Naive thymus-derived CD8-positive, alpha-beta T cell (primary cell): ENCODE measurements at regions of chr7 and their contacts with region 1.

Region 1: GRCh38 chr7:139018910-139019309 is 16.9 kb downstream of the ZC3HAV1L start:
- DNase-seq: no peak
- ATAC-seq: no peak
- H3K4me3 Mint-ChIP-seq: no peak overlapping the region
- H3K27ac Mint-ChIP-seq: no peak overlapping the region
- H3K4me1 Mint-ChIP-seq: peaks cover 0 to 7% (median 7%) of the 10 kb centered on the region in 4 donors
- H3K27me3 Mint-ChIP-seq: peaks cover 0 to 5% (median 1%) of the 10 kb centered on the region in 5 donors

Region 2: DNA sequence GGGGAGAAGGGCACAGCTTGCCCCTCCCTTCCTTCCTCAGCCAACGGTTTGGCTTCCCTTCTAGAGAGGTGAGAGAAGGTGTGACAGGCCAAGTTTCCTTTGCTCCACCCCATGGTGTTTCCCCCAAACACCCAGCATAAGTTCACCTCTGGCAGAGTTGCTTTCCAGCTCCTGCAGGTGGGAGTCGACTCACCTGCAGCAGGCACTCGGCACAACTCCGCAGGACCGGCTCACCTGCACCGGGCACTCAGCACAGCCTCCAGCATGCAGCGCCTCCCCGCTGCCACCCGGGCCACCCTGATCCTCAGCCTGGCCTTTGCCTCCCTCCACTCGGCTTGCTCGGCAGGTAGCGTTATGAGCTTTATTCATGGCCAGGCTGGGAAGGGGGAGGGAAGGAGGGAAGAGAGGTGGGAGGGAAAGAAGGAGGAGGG is 221.1 kb before region 1 on chr7 and contains the starts of genes ATP6V0A4 and TMEM213:
- POLR2A ChIA-PET with region 1: no interaction called
- DNase-seq: no peak
- ATAC-seq: peak; percentile 49 to 71
- H3K4me3 Mint-ChIP-seq: peak within 1 kb of the TSS in 2 of 10 donors; percentile 25 to 41
- H3K27ac Mint-ChIP-seq: peak within 1 kb of the TSS in 7 of 10 donors; percentile 9 to 81 (median 44)
- H3K4me1 Mint-ChIP-seq: peaks cover 7 to 13% (median 10%) of the 10 kb centered on the region in 4 donors
- H3K27me3 Mint-ChIP-seq: peaks cover 0 to 3% (median 0%) of the 10 kb centered on the region in 5 donors
- polyA plus RNA-seq, gene ATP6V0A4: not detected
- polyA plus RNA-seq, gene TMEM213: not detected

Region 3: DNA sequence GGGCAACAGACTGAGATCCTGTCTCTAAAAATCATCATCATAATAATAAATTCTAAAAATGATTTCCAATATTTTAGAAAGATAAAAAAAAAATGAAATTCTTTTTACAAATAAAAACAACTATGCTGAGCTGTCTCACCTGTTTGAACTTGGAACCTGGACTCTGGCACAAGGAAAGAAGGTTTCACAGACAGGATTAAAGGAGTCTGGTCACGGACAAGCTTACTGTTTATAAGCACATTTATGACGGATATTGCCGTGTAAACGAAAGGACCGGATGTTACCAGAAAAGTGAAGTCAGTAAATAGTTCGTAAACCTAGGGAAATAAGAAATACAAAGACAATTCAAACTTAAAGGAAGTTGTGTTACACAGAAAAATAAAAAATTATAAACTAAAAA is 107.9 kb before region 1 on chr7:
- POLR2A ChIA-PET with region 1: no interaction called
- DNase-seq: no peak
- ATAC-seq: no peak
- H3K4me3 Mint-ChIP-seq: no peak overlapping the region
- H3K27ac Mint-ChIP-seq: no peak overlapping the region
- H3K4me1 Mint-ChIP-seq: peaks cover 0 to 7% (median 1%) of the 10 kb centered on the region in 4 donors
- H3K27me3 Mint-ChIP-seq: peaks cover 3 to 13% (median 4%) of the 10 kb centered on the region in 5 donors

Region 4: DNA sequence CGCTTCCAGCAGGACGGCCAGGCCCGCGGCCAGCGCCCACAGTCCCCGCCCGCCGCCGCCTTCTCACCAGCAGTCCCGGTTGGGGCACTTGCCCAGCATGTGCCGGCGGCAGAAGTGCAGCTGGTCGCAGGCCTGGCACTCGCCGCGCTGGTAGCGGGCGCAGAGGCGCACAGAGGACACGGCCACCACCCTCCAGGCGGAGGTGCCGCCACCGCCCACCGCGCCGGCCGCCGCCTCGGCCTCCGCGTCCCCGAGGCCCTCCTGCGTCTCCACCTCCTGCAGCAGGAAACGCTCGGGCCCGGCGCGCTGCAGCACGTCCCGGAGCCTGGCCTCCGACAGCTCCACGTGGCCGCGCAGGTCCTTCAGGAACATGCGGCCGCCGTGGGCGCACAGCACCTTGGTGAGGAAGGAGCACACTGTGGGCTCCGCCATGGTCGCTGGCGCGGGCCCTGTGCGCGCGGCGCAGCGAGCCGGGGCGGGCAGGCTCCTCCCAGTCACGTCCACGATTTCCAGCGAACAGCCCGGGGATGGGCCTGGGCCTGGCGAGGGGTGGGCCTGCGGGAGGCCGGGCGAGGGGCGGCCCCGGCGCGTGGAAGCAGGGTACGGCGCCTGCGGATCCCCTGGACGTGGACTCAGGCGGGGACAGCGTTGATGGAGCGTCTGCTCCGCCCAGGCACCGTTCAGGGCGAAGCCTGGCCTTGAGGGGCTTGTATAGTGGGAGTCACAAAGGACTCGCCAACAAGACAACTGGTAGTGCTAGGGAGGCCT is 16.9 kb after region 1 on chr7 and contains the start of gene ZC3HAV1L:
- POLR2A ChIA-PET with region 1: no interaction called
- DNase-seq: peak in 6 of 10 donors; percentile 8 to 37 (median 23)
- ATAC-seq: peak; percentile 70 to 74
- H3K4me3 Mint-ChIP-seq: peak within 1 kb of the TSS; percentile 69 to 92 (median 82)
- H3K27ac Mint-ChIP-seq: peak within 1 kb of the TSS in 5 of 10 donors; percentile 15 to 76 (median 44)
- H3K4me1 Mint-ChIP-seq: peaks cover 6 to 16% (median 8%) of the 10 kb centered on the region in 4 donors
- H3K27me3 Mint-ChIP-seq: peaks cover 0 to 1% (median 0%) of the 10 kb centered on the region in 5 donors
- polyA plus RNA-seq, gene ZC3HAV1L: 0.23 TPM in 1 of 3 donors, not detected in the others

Region 5: GRCh38 chr7:139264220-139264619 is 245.3 kb after region 1 on chr7:
- POLR2A ChIA-PET with region 1: interaction called, 10 read pairs
- DNase-seq: no peak
- ATAC-seq: no peak
- H3K4me3 Mint-ChIP-seq: no peak overlapping the region
- H3K27ac Mint-ChIP-seq: no peak overlapping the region
- H3K4me1 Mint-ChIP-seq: peaks cover 0 to 1% (median 0%) of the 10 kb centered on the region in 4 donors
- H3K27me3 Mint-ChIP-seq: no peaks in the 10 kb centered on the region

Region 6: GRCh38 chr7:139543801-139544603 is 525.1 kb after region 1 on chr7:
- POLR2A ChIA-PET with region 1: no interaction called
- DNase-seq: no peak
- ATAC-seq: no peak
- H3K4me3 Mint-ChIP-seq: no peak overlapping the region
- H3K27ac Mint-ChIP-seq: peak overlapping the region in 1 of 10 donors; percentile 29
- H3K4me1 Mint-ChIP-seq: no peaks in the 10 kb centered on the region
- H3K27me3 Mint-ChIP-seq: peaks cover 0 to 1% (median 0%) of the 10 kb centered on the region in 5 donors